Colonic mucosa (tissue), 4 donors: ENCODE measurements at regions of chr3 and their contacts with region 1.

Region 1: GRCh38 chr3:194773216-194773615 is 87.5 kb downstream of the FAM43A start:
- DNase-seq: peak; percentile 49
- H3K4me3 ChIP-seq: no peak overlapping the region
- H3K27ac ChIP-seq: no peak overlapping the region
- H3K4me1 ChIP-seq: peaks cover 4% of the 10 kb centered on the region
- H3K27me3 ChIP-seq: no peaks in the 10 kb centered on the region
- CTCF ChIP-seq: no peak

Region 2: DNA sequence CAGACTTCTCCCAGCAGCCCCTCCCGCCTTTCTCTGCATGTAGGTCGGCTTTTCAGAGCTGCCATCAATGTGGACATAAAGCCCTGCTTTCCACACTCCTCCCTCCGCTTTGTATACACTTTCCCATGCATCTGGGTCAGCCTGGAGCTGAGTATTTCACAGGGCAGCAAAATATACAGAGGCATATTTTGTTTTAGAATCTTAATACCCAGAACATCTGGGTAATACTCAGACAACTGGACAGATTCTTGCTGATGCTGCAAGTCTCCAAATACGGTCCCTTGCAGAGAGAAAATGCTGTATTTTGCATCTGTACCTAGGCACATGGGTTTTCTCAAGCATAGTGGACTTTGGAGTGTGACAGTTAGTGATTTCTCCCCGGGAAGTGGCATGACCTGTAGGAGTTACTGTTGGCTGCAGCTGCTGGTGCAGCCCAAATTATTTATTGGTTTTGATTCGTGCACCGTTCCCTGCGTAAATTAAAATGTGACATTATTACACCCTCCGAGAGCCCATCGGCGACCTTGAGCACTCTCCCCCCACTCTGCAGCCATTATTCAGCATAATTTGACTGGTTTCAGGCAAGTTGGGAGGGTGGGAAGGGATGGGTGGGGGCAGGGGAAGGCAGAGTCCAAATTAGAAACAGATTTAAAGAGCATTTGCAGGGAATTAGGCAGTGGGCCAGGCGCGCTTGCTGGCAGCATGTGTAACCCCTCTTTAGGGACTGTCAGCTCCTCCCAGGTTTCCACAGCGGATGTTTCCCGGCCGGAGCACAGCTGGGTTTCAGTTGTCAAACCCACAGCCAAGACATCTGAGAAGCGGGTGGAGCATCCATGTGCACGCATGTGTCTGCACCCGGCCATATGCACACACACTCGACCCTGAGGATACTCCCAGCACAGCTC is 522.9 kb before region 1 on chr3:
- intact Hi-C with region 1: no loop called
- DNase-seq: peak; percentile 75
- H3K4me3 ChIP-seq: no peak overlapping the region
- H3K27ac ChIP-seq: no peak overlapping the region
- H3K4me1 ChIP-seq: no peaks in the 10 kb centered on the region
- H3K27me3 ChIP-seq: no peaks in the 10 kb centered on the region
- CTCF ChIP-seq: no peak

Region 3: GRCh38 chr3:194841066-194841841 is 68.0 kb after region 1 on chr3:
- intact Hi-C with region 1: no loop called
- DNase-seq: no peak
- H3K4me3 ChIP-seq: no peak overlapping the region
- H3K27ac ChIP-seq: no peak overlapping the region
- H3K4me1 ChIP-seq: no peaks in the 10 kb centered on the region
- H3K27me3 ChIP-seq: no peaks in the 10 kb centered on the region
- CTCF ChIP-seq: no peak

Region 4: DNA sequence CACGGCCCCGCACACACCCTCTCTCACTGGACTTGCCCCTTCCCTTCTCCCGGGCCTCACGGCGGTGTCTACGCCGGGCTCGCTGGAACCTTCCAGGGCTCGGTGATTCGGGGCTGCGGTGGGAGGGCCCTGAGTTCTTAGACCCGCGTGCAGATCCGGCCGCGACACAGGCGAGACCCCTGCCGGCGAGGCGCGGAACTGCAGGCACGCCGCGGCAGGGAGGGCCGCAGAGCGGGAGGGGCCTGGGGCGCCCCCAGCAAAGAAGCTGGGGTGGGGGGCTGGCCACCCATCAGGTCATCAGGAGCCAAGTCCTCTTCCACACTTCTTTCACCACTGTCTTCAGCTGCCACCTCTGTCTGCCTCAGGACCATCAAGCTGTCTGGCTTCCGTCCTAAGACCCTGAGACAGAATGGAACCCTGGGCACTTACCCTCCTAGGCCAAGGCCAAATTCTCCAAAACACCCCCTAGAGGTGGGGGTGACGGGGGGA is 333.2 kb after region 1 on chr3:
- intact Hi-C with region 1: loop called (anchors 5 kb)
- DNase-seq: peak; percentile 64
- H3K4me3 ChIP-seq: no peak overlapping the region
- H3K27ac ChIP-seq: no peak overlapping the region
- H3K4me1 ChIP-seq: peaks cover 5% of the 10 kb centered on the region
- H3K27me3 ChIP-seq: no peaks in the 10 kb centered on the region
- CTCF ChIP-seq: peak; percentile 100